ENCODE measurements at regions of chr2 and their contacts with region 1.

Region 1: GRCh38 chr2:110677530-110678456 is at the start of gene BUB1:
- DNase-seq: peak; percentile 82
- ATAC-seq: peak; percentile 98
- H3K4me3 ChIP-seq: peak within 1 kb of the TSS; percentile 88 to 91
- H3K27ac ChIP-seq: peak within 1 kb of the TSS; percentile 99
- H3K4me1 ChIP-seq: peaks cover 30% of the 10 kb centered on the region
- H3K27me3 ChIP-seq: no peaks in the 10 kb centered on the region
- CTCF ChIP-seq: no peak
- total RNA-seq, gene BUB1: 91.2 TPM

Region 2: GRCh38 chr2:110688594-110689091 is 10.8 kb after region 1 on chr2:
- CTCF ChIA-PET with region 1: no interaction called
- POLR2A ChIA-PET with region 1: interaction called, 14 read pairs
- in situ Hi-C with region 1: no loop called
- intact Hi-C with region 1: no loop called
- DNase-seq: no peak
- ATAC-seq: no peak
- H3K4me3 ChIP-seq: no peak overlapping the region
- H3K27ac ChIP-seq: no peak overlapping the region
- H3K4me1 ChIP-seq: no peaks in the 10 kb centered on the region
- H3K27me3 ChIP-seq: no peaks in the 10 kb centered on the region
- CTCF ChIP-seq: no peak

Region 3: GRCh38 chr2:110752871-110753270 is 75.1 kb after region 1 on chr2:
- CTCF ChIA-PET with region 1: interaction called, 3 read pairs
- POLR2A ChIA-PET with region 1: interaction called, 4 read pairs
- in situ Hi-C with region 1: no loop called
- intact Hi-C with region 1: loop called (anchors 5 kb)
- DNase-seq: no peak
- ATAC-seq: no peak
- H3K4me3 ChIP-seq: no peak overlapping the region
- H3K27ac ChIP-seq: no peak overlapping the region
- H3K4me1 ChIP-seq: peaks cover 17% of the 10 kb centered on the region
- H3K27me3 ChIP-seq: no peaks in the 10 kb centered on the region
- CTCF ChIP-seq: no peak

Region 4: DNA sequence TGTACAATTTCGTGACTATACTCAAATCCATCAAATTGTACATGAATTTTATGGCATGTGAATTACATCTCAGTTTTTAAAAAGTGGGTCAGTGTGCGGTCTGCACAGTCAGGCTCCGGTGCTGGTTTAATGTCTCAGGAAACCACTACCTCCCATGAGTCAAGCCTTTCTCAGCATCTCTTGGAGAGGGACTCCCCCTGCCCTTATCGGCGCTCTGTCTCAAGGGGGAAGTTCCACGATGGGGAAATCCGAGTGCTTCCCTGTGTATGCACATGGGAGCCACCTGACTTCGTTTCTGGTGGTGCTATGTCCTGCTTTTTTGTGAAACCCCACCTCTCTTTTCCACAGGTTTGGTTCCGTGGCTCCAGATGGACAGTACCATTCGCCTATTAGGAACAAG is 127.1 kb after region 1 on chr2:
- CTCF ChIA-PET with region 1: no interaction called
- POLR2A ChIA-PET with region 1: no interaction called
- in situ Hi-C with region 1: no loop called
- intact Hi-C with region 1: no loop called
- DNase-seq: no peak
- ATAC-seq: no peak
- H3K4me3 ChIP-seq: no peak overlapping the region
- H3K27ac ChIP-seq: no peak overlapping the region
- H3K4me1 ChIP-seq: no peaks in the 10 kb centered on the region
- H3K27me3 ChIP-seq: peaks cover 4% of the 10 kb centered on the region; the same call in 1 of the 2 replicates
- CTCF ChIP-seq: no peak

Region 5: GRCh38 chr2:110977403-110977802 is 299.6 kb after region 1 on chr2:
- CTCF ChIA-PET with region 1: no interaction called
- POLR2A ChIA-PET with region 1: interaction called, 15 read pairs
- in situ Hi-C with region 1: no loop called
- intact Hi-C with region 1: no loop called
- DNase-seq: no peak
- ATAC-seq: no peak
- H3K4me3 ChIP-seq: no peak overlapping the region
- H3K27ac ChIP-seq: no peak overlapping the region
- H3K4me1 ChIP-seq: no peaks in the 10 kb centered on the region
- H3K27me3 ChIP-seq: no peaks in the 10 kb centered on the region
- CTCF ChIP-seq: no peak

Measured in Panc1 (cell line).